Colonic mucosa (tissue), 4 donors: ENCODE measurements at regions of chr7 and their contacts with region 1.

Region 1: DNA sequence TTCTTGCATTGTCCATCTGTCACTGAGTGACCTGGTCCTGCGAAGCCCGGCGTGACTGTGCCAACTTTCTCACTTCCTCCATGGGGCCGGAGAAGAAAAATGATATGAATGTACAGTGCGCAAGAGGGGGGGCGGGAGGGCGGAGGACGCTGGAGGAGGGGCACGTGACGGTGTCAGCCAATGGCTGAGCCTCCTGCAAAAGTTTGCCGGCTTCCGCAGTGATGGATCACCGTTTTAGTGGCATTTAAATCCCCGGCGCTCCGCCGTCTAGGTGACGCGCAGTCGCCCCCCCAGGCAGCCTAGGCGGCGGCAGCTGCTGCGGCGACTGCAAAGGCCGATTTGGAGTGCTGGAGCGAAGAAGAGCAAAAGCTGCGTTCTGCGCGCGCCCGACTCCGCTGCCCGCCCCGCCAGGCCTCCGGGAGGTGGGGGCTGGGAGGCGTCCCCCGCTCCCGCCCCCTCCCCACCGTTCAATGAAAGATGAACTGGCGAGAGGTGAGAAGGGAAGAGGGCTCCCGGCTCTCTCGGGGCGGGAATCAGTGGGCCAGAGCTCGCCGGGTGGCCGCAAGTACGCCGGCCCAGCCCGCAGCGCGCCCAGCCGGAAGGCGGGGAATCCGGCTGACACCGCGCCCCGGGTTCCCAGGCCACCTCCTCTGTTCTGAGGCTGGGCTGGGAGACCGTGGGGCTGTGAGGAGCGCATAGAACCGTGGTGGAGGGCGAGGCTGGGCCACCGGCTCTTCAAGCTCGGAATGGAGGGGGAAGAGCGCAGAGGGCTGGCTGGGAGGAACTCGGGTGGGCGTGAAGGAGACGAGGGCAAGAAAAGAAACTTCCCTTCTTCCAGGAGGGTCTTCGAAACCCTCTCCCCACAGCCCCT is at the start of gene HOXA1:
- DNase-seq: peak; percentile 92
- H3K4me3 ChIP-seq: peak within 1 kb of the TSS; percentile 74
- H3K27ac ChIP-seq: peak within 1 kb of the TSS; percentile 92
- H3K4me1 ChIP-seq: peaks cover 11% of the 10 kb centered on the region
- H3K27me3 ChIP-seq: no peaks in the 10 kb centered on the region
- CTCF ChIP-seq: no peak
- total RNA-seq, gene HOXA1: 1.7 to 2.0 TPM

Region 2: GRCh38 chr7:26515314-26515842 is 580.8 kb before region 1 on chr7:
- intact Hi-C with region 1: no loop called
- DNase-seq: peak; percentile 80
- H3K4me3 ChIP-seq: no peak overlapping the region
- H3K27ac ChIP-seq: peak overlapping the region; percentile 2
- H3K4me1 ChIP-seq: no peaks in the 10 kb centered on the region
- H3K27me3 ChIP-seq: no peaks in the 10 kb centered on the region
- CTCF ChIP-seq: no peak

Region 3: DNA sequence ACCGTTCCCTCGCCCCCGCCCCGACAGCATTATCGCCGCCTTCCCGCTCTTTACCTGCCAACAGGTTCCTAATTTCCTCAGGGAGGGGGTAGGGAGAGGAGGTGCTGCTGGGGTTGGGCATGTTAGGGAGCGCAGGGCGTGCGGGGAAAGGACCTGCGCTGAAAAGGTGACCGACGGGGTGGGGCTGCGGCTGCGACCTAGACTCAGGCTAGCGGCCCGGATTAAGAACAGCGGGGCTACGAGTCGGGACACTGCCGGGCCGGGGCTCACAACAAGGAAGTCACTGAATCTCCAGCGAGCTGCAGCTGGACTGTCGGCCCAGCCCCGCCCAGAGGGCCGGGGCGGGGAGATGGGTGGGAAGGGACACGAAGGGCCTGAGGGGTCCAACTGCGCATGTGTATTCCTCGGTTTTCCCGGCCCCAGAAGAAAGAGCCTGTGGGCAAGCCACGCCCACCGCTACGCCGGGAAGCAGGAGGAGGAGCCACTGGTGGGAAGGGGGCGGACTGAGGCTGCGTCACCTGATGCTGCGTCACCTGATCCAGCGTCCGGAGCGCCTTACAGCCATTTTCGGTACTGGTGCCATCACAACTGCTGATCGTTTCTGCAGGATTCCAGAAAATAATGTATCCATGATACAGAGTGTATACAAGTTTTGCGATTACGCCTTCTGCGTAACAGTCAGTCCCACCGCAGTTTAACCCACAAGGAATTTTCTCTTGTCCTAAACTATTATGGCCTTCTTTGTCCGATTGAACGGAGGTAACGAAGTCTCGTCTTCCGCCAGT is 231.6 kb before region 1 on chr7 and contains the start of gene SKAP2:
- intact Hi-C with region 1: loop called (anchors 5 kb)
- DNase-seq: peak; percentile 99
- H3K4me3 ChIP-seq: peak within 1 kb of the TSS; percentile 48
- H3K27ac ChIP-seq: peak within 1 kb of the TSS; percentile 98
- H3K4me1 ChIP-seq: no peaks in the 10 kb centered on the region
- H3K27me3 ChIP-seq: no peaks in the 10 kb centered on the region
- CTCF ChIP-seq: no peak
- total RNA-seq, gene SKAP2: 41.6 to 46.9 TPM